Activated naive CD8-positive, alpha-beta T cell treated with anti-CD3 and anti-CD28 coated beads, Interleukin-2, amount 10 ng/mL, durations not matched to agents 7 days and 5 days (primary cell): ENCODE measurements at regions of chr1 and their contacts with region 1.

Region 1: GRCh38 chr1:156581661-156582387 is 2.3 kb downstream of the TTC24 start:
- DNase-seq: peak; percentile 70
- ATAC-seq: peak; percentile 84
- H3K4me3 Mint-ChIP-seq: peak overlapping the region; percentile 98
- H3K27ac Mint-ChIP-seq: peak overlapping the region; percentile 99
- H3K4me1 Mint-ChIP-seq: peaks cover 23% of the 10 kb centered on the region
- H3K27me3 Mint-ChIP-seq: no peaks in the 10 kb centered on the region

Region 2: GRCh38 chr1:156456622-156457465 is 125.0 kb before region 1 on chr1:
- POLR2A ChIA-PET with region 1: interaction called, 11 read pairs
- DNase-seq: peak; percentile 89
- ATAC-seq: peak; percentile 87
- H3K4me3 Mint-ChIP-seq: peak overlapping the region; percentile 84
- H3K27ac Mint-ChIP-seq: peak overlapping the region; percentile 93
- H3K4me1 Mint-ChIP-seq: peaks cover 8% of the 10 kb centered on the region
- H3K27me3 Mint-ChIP-seq: peaks cover 10% of the 10 kb centered on the region

Region 3: DNA sequence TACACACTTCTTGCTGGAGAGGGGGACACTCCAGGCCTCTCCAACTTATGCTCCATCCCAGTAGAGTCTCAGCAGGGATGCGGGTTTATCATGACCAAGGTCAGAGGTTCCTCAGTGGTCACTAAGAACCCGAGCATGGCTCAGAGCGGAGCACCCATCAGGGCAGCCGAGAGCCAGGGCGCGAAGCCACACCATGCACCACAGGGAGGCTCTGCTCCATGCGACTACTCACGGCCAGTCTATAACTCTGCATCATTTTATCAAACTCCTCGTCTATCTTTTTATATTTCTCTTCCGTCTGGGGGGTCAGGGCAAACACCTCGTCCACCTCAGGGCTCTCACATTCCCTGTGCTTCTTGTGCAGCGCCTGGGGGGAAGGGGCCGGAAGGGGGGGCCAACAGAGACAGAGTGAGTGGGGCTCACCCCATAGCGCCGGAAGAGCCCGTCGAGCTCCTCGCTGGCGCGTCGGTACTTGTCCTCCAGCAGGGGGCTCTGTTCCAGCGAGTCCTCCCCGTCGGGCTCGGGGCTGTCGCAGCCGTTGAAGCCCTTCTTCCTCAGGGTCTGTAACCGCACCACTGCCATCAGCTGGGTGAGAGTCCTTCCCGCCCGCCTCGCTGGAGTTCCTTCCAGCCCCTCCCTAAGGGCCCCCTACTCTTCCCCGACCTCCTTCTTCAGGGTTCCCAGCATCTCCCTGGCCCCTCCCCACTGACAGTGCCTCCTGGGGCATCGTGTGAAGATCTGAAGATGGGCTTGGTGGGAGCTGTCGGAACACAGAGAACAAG is 101.2 kb before region 1 on chr1:
- POLR2A ChIA-PET with region 1: interaction called, 10 read pairs
- DNase-seq: peak; percentile 79
- ATAC-seq: peak; percentile 93
- H3K4me3 Mint-ChIP-seq: peak overlapping the region; percentile 21
- H3K27ac Mint-ChIP-seq: peak overlapping the region; percentile 82
- H3K4me1 Mint-ChIP-seq: peaks cover 31% of the 10 kb centered on the region
- H3K27me3 Mint-ChIP-seq: no peaks in the 10 kb centered on the region

Region 4: GRCh38 chr1:156508163-156508887 is 73.5 kb before region 1 on chr1:
- POLR2A ChIA-PET with region 1: interaction called, 30 read pairs
- DNase-seq: peak; percentile 50
- ATAC-seq: no peak
- H3K4me3 Mint-ChIP-seq: peak overlapping the region; percentile 85
- H3K27ac Mint-ChIP-seq: peak overlapping the region; percentile 91
- H3K4me1 Mint-ChIP-seq: peaks cover 52% of the 10 kb centered on the region
- H3K27me3 Mint-ChIP-seq: peaks cover 5% of the 10 kb centered on the region

Region 5: DNA sequence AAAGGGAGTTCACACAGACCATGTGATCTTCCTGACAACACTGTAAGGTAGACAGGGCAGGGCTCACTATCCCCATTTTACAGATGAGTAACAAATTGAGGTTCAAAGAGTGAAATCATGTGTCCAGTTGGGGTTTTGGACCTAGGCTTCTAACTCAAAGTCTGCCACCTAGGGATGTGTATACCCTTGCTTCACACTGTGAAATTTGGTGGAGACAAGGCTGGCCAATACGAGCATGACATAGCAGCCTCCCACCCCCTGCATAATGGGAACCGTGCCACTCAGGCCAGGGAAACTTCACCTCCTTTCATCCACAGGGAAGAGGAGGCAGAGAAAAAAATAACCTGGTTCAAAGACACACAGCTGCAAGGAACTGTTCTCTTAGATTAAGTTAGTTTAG is 16.3 kb before region 1 on chr1:
- POLR2A ChIA-PET with region 1: no interaction called
- DNase-seq: no peak
- ATAC-seq: no peak
- H3K4me3 Mint-ChIP-seq: no peak overlapping the region
- H3K27ac Mint-ChIP-seq: peak overlapping the region; percentile 21
- H3K4me1 Mint-ChIP-seq: no peaks in the 10 kb centered on the region
- H3K27me3 Mint-ChIP-seq: no peaks in the 10 kb centered on the region

Region 6: GRCh38 chr1:156601122-156601830 is 19.5 kb after region 1 on chr1 and contains the start of gene GPATCH4:
- POLR2A ChIA-PET with region 1: interaction called, 18 read pairs
- DNase-seq: peak; percentile 84
- ATAC-seq: peak; percentile 76
- H3K4me3 Mint-ChIP-seq: peak within 1 kb of the TSS; percentile 99
- H3K27ac Mint-ChIP-seq: peak within 1 kb of the TSS; percentile 96
- H3K4me1 Mint-ChIP-seq: peaks cover 29% of the 10 kb centered on the region
- H3K27me3 Mint-ChIP-seq: no peaks in the 10 kb centered on the region
- total RNA-seq, gene GPATCH4: 29.7 to 31.1 TPM